Common myeloid progenitor, CD34-positive (primary cell): ENCODE measurements at regions of chr9 and their contacts with region 1.

Region 1: GRCh38 chr9:6054280-6055099 is 39.1 kb upstream of the RANBP6 start:
- DNase-seq: peak; percentile 84 to 91 (median 89)
- H3K4me3 ChIP-seq: no peak overlapping the region
- H3K27ac ChIP-seq: no peak overlapping the region
- H3K4me1 ChIP-seq: peaks cover 0 to 5% (median 2%) of the 10 kb centered on the region in 4 experiments
- H3K27me3 ChIP-seq: no peaks in the 10 kb centered on the region

Region 2: GRCh38 chr9:5920860-5921328 is 133.6 kb before region 1 on chr9:
- CTCF ChIA-PET with region 1: no interaction called
- POLR2A ChIA-PET with region 1: no interaction called
- DNase-seq: no peak
- H3K4me3 ChIP-seq: no peak overlapping the region
- H3K27ac ChIP-seq: no peak overlapping the region
- H3K4me1 ChIP-seq: no peaks in the 10 kb centered on the region
- H3K27me3 ChIP-seq: no peaks in the 10 kb centered on the region

Region 3: DNA sequence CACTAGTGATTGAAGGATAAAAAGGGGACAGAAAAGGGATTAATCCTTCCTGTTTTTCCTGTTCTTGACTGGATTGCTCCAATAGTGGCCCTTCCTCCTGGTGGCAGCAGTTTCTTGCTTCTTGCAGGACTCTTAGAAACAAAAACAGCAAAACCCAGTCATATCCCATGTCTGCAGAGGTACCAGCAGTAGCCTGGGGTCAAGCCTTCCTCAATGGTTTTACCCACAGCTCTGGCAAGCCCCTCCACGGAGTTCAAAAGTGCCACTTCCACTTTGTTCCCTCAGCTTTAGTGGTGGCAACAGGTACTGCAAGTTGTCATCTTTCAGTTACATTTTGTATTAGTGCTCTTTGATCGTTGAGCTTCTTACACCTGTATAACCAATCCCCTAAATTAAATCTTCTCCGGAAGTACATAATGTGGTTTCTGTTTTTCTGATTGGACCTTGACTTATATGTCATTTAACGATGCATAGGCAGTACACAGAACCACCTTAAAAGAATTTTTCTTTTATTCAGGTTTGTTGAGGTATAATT is 30.4 kb before region 1 on chr9:
- CTCF ChIA-PET with region 1: interaction called, 12 read pairs
- POLR2A ChIA-PET with region 1: no interaction called
- DNase-seq: peak; percentile 36 to 51 (median 47)
- H3K4me3 ChIP-seq: peak overlapping the region in 1 of 7 experiments; percentile 45
- H3K27ac ChIP-seq: no peak overlapping the region
- H3K4me1 ChIP-seq: peaks cover 0 to 3% (median 1%) of the 10 kb centered on the region in 4 experiments
- H3K27me3 ChIP-seq: peaks cover 0 to 2% (median 0%) of the 10 kb centered on the region in 5 experiments

Region 4: GRCh38 chr9:6106576-6107339 is 52.3 kb after region 1 on chr9:
- CTCF ChIA-PET with region 1: interaction called, 23 read pairs
- POLR2A ChIA-PET with region 1: no interaction called
- DNase-seq: peak; percentile 85 to 96 (median 93)
- H3K4me3 ChIP-seq: peak overlapping the region in 2 of 7 experiments; percentile 22 to 23
- H3K27ac ChIP-seq: peak overlapping the region; percentile 3 to 82
- H3K4me1 ChIP-seq: peaks cover 0 to 10% (median 7%) of the 10 kb centered on the region in 4 experiments
- H3K27me3 ChIP-seq: no peaks in the 10 kb centered on the region

Region 5: DNA sequence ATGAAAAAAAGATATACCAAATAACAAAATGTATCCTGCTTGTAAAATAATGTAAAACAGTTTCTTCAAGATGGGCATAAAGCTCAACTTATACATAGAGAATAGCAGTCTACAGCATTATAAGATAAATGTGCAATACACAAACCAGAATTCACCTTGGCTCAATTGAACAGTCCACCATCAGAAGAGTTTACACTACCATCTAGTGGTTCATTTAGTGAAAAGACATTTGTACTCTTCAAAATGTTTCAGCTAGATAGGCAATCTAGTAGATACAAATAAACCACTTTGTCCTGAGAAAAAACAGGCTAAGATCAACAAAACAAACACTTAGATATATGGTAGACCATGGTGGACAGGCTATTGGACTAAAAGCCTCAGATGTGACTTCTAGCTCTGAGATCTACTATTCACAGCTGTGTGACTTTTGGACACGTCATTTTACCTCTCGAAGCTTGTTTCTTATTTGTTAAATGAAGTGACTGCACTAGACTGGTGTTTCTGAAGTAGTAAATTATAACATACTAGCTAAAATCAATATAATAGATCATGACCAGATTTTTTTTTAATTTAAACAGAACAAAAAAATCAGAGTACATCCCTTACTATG is 251.6 kb after region 1 on chr9:
- CTCF ChIA-PET with region 1: interaction called, 41 read pairs
- POLR2A ChIA-PET with region 1: no interaction called
- DNase-seq: peak; percentile 15 to 60 (median 52)
- H3K4me3 ChIP-seq: no peak overlapping the region
- H3K27ac ChIP-seq: no peak overlapping the region
- H3K4me1 ChIP-seq: peaks cover 0 to 1% (median 0%) of the 10 kb centered on the region in 4 experiments
- H3K27me3 ChIP-seq: peaks cover 3 to 15% (median 9%) of the 10 kb centered on the region in 5 experiments